Panc1 (cell line): ENCODE measurements at regions of chr11 and their contacts with region 1.

Region 1: GRCh38 chr11:36746886-36747710 is 149.1 kb upstream of the RAG2 start:
- DNase-seq: peak; percentile 89
- ATAC-seq: peak; percentile 99
- H3K4me3 ChIP-seq: no peak overlapping the region
- H3K27ac ChIP-seq: no peak overlapping the region
- H3K4me1 ChIP-seq: no peaks in the 10 kb centered on the region
- H3K27me3 ChIP-seq: 0 out of 2 replicates have a peak, but pooled peaks cover 5% of the 10 kb centered on the region
- CTCF ChIP-seq: peak; percentile 99

Region 2: DNA sequence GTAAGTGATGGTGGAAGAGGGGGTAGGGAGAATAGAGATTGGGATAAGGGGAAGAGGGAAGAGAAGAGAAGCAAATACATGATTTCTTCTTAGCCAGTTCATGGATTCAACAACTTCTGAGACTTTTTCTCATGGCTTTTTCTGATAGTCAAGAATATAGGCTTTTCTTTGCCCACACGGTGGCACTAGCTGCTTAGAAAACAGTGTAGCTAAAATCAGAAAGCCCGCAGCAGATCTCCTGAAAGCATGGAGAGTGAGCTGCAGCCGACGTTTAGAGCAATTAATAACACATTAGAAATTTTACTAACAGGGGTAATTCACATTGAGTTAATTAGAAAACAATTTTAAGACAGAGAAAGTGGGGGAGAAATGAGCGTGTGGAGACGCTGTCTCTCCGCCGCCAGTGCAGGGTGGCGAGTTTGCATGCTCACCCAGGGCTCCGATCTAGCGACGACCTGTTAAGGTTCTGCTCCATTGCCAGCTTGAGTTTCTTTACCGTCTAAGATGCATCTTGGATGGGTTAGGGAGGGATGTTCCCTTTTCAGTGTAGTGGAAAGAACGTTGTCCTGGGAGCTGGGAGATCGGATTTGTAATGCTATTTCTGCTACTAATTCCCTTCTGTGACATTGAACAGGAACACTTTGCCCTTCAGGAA is 182.6 kb before region 1 on chr11:
- CTCF ChIA-PET with region 1: interaction called, 35 read pairs
- POLR2A ChIA-PET with region 1: no interaction called
- in situ Hi-C with region 1: no loop called
- intact Hi-C with region 1: loop called (anchors 1 kb)
- DNase-seq: peak; percentile 18
- ATAC-seq: peak; percentile 90
- H3K4me3 ChIP-seq: peak overlapping the region; percentile 22 to 30
- H3K27ac ChIP-seq: peak overlapping the region; percentile 41; the same call in 1 of the 2 replicates
- H3K4me1 ChIP-seq: peaks cover 8% of the 10 kb centered on the region
- H3K27me3 ChIP-seq: peaks cover 9% of the 10 kb centered on the region; the same call in 1 of the 2 replicates
- CTCF ChIP-seq: peak; percentile 80

Region 3: DNA sequence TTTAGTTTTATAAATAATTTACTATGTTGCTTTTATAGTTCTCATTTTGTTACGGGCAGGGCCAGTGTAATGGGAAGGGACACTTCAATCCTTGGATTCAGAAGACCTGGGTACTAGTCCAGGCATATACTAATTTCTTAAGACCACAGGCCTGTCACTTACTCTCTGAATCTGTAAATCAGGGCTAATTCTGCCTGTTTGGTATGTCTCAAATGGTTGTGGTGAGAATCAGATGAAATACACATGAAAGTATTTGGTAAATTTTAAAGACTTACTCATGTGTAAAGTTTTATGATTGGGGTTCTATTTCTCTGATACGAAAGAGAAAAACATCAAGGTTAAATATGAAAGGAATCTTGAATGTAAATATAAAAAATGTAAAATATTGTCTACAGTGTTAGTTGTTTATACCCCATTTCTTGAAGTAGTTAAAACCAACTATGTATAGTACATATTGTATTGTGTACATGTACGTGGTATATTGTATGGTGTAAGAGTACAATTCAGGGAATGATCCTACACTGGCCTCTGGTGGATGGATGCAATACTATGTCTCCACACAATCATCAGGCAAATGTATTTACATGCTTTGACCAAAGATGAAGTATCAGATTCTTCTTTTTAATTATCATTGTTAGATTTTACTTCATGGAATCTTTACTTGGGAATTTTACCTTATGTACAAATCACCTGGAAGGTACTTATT is 124.5 kb before region 1 on chr11:
- CTCF ChIA-PET with region 1: interaction called, 4 read pairs
- POLR2A ChIA-PET with region 1: no interaction called
- in situ Hi-C with region 1: no loop called
- intact Hi-C with region 1: loop called (anchors 5 kb)
- DNase-seq: peak; percentile 7
- ATAC-seq: peak; percentile 95
- H3K4me3 ChIP-seq: no peak overlapping the region
- H3K27ac ChIP-seq: peak overlapping the region; percentile 36; the same call in 1 of the 2 replicates
- H3K4me1 ChIP-seq: peaks cover 3% of the 10 kb centered on the region; the same call in 1 of the 2 replicates
- H3K27me3 ChIP-seq: no peaks in the 10 kb centered on the region
- CTCF ChIP-seq: peak; percentile 70; the same call in 1 of the 2 replicates

Region 4: DNA sequence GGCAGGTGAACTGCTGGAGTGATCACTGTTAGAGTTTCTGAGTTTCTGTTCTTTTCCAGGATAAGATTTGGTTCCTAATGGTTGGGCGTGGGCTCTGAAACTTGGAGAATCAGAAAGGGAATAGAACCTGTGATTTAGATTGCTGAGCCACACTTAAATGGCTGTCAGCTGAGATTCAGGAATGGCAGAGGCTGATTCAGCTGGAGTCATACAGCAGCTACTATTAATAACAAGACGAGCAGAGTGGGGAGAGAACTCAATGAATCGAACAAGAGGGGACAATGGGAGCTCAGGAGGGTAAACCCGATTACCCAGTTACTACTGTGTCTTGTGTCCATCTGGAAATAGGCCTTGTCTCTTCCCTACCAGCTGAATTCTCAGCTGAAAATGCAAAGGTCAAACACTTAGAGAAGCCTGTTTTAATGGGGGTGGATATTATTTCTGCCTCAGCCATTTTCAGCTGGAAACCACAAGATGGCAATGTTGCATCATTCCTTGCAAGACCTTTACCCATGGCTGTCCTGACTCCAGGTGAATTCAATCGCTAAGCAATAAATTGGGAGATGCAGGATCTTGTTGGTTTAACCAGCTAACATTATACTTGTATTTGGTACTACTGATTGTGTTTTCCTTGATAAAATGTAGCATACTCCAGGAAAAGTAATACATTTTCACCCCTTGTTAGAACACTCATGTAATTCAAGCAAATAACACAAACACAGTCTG is 44.6 kb before region 1 on chr11:
- CTCF ChIA-PET with region 1: interaction called, 18 read pairs
- POLR2A ChIA-PET with region 1: no interaction called
- in situ Hi-C with region 1: no loop called
- intact Hi-C with region 1: loop called (anchors 1 kb)
- DNase-seq: peak; percentile 53
- ATAC-seq: peak; percentile 94
- H3K4me3 ChIP-seq: no peak overlapping the region
- H3K27ac ChIP-seq: peak overlapping the region; percentile 7; the same call in 1 of the 2 replicates
- H3K4me1 ChIP-seq: peaks cover 4% of the 10 kb centered on the region; the same call in 1 of the 2 replicates
- H3K27me3 ChIP-seq: peaks cover 7% of the 10 kb centered on the region; the same call in 1 of the 2 replicates
- CTCF ChIP-seq: peak; percentile 87

Region 5: GRCh38 chr11:36763187-36763586 is 16.1 kb after region 1 on chr11:
- CTCF ChIA-PET with region 1: no interaction called
- POLR2A ChIA-PET with region 1: no interaction called
- in situ Hi-C with region 1: no loop called
- intact Hi-C with region 1: no loop called
- DNase-seq: no peak
- ATAC-seq: no peak
- H3K4me3 ChIP-seq: no peak overlapping the region
- H3K27ac ChIP-seq: no peak overlapping the region
- H3K4me1 ChIP-seq: no peaks in the 10 kb centered on the region
- H3K27me3 ChIP-seq: no peaks in the 10 kb centered on the region
- CTCF ChIP-seq: no peak

Region 6: GRCh38 chr11:36809303-36809702 is 62.2 kb after region 1 on chr11:
- CTCF ChIA-PET with region 1: no interaction called
- POLR2A ChIA-PET with region 1: no interaction called
- in situ Hi-C with region 1: no loop called
- intact Hi-C with region 1: no loop called
- DNase-seq: no peak
- ATAC-seq: no peak
- H3K4me3 ChIP-seq: no peak overlapping the region
- H3K27ac ChIP-seq: no peak overlapping the region
- H3K4me1 ChIP-seq: no peaks in the 10 kb centered on the region
- H3K27me3 ChIP-seq: no peaks in the 10 kb centered on the region
- CTCF ChIP-seq: no peak